Mammary epithelial cell (primary cell): ENCODE measurements at regions of chr2 and their contacts with region 1.

Region 1: GRCh38 chr2:197378494-197379307 is 56.1 kb downstream of the SF3B1 start:
- DNase-seq: peak; percentile 25
- H3K4me3 ChIP-seq: peak overlapping the region in 1 of 3 experiments; percentile 23
- H3K27ac ChIP-seq: no peak overlapping the region
- H3K4me1 ChIP-seq: peaks cover 3% of the 10 kb centered on the region
- H3K27me3 ChIP-seq: no peaks in the 10 kb centered on the region
- CTCF ChIP-seq: peak; percentile 75 to 79

Region 2: DNA sequence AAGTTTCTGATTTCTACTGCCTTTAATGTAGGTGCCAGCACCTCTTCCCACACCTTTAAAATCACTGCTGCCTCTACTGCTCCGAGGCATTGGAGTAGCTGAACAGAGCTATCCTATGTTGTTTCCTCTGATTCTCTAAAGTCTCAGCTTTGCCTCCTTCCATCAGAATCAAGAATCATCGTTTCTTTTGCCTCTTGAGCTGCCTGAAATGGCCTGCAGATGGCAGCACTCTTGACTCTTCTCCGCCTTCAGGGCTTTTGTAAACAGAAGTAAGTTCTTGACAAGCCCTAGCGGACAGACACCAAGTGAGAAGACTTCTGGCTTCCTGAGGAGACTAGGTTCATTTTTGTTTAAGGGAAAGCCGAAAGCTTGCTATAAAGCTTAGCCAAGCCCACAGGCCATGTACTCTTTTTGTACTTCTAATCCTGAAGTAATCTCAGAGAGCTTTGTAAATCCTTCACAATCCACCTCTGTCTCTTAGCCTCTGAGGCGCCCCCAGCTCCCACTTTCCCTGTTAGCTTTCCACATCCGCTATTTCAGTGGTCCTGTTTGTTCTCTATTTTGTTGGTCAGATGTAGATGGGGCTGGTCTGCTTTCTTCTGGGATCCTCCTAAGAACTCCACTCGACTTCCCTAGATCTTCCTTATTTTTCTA is 627.6 kb before region 1 on chr2:
- CTCF ChIA-PET with region 1: no interaction called
- dilution Hi-C with region 1: no loop called
- in situ Hi-C with region 1: no loop called
- intact Hi-C with region 1: loop called (anchors 2 kb)
- DNase-seq: peak; percentile 50
- H3K4me3 ChIP-seq: no peak overlapping the region
- H3K27ac ChIP-seq: no peak overlapping the region
- H3K4me1 ChIP-seq: no peaks in the 10 kb centered on the region
- H3K27me3 ChIP-seq: no peaks in the 10 kb centered on the region
- CTCF ChIP-seq: peak; percentile 84 to 94

Region 3: GRCh38 chr2:197011799-197012641 is 366.7 kb before region 1 on chr2:
- CTCF ChIA-PET with region 1: no interaction called
- dilution Hi-C with region 1: no loop called
- in situ Hi-C with region 1: no loop called
- intact Hi-C with region 1: loop called (anchors 1 kb)
- DNase-seq: peak; percentile 32
- H3K4me3 ChIP-seq: no peak overlapping the region
- H3K27ac ChIP-seq: no peak overlapping the region
- H3K4me1 ChIP-seq: peaks cover 4% of the 10 kb centered on the region
- H3K27me3 ChIP-seq: no peaks in the 10 kb centered on the region
- CTCF ChIP-seq: peak; percentile 73 to 83

Region 4: GRCh38 chr2:197184959-197185586 is 193.6 kb before region 1 on chr2:
- CTCF ChIA-PET with region 1: no interaction called
- dilution Hi-C with region 1: no loop called
- in situ Hi-C with region 1: loop called (anchors 10 to 25 kb)
- intact Hi-C with region 1: no loop called
- DNase-seq: peak; percentile 32
- H3K4me3 ChIP-seq: no peak overlapping the region
- H3K27ac ChIP-seq: no peak overlapping the region
- H3K4me1 ChIP-seq: no peaks in the 10 kb centered on the region
- H3K27me3 ChIP-seq: no peaks in the 10 kb centered on the region
- CTCF ChIP-seq: no peak

Region 5: GRCh38 chr2:197777823-197778407 is 399.2 kb after region 1 on chr2:
- CTCF ChIA-PET with region 1: no interaction called
- dilution Hi-C with region 1: no loop called
- in situ Hi-C with region 1: no loop called
- intact Hi-C with region 1: loop called (anchors 5 kb)
- DNase-seq: peak; percentile 4
- H3K4me3 ChIP-seq: no peak overlapping the region
- H3K27ac ChIP-seq: no peak overlapping the region
- H3K4me1 ChIP-seq: no peaks in the 10 kb centered on the region
- H3K27me3 ChIP-seq: no peaks in the 10 kb centered on the region
- CTCF ChIP-seq: peak; percentile 60 to 64